ENCODE measurements at regions of chr12 and their contacts with region 1.

Region 1: DNA sequence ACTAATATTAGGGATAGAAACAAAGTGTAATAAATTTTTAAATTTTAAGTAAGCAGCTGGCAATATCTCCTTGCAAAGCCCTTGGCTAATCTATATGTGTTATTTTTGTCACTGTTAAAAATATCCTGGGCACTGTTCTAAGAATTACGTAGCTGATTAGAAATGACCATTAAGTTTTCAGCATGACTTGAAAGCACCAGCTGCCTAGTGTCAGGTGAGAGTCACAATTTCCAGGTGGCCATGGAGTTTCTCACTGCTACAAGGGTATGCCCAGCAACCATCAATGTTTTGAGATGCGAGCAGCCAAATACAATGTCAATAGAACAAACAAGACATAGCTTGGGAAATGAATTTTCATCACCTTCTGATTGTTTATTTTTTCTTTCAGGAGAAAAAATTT is 23.3 kb upstream of the GYS2 start:
- DNase-seq: no peak
- ATAC-seq: no peak
- H3K4me3 ChIP-seq: no peak overlapping the region
- H3K4me3 Mint-ChIP-seq: no peak overlapping the region
- H3K27ac ChIP-seq: no peak overlapping the region
- H3K27ac Mint-ChIP-seq: no peak overlapping the region
- H3K4me1 ChIP-seq: no peaks in the 10 kb centered on the region
- H3K4me1 Mint-ChIP-seq: peaks cover 7% of the 10 kb centered on the region
- H3K27me3 ChIP-seq: no peaks in the 10 kb centered on the region
- H3K27me3 Mint-ChIP-seq: no peaks in the 10 kb centered on the region
- CTCF ChIP-seq: no peak

Region 2: DNA sequence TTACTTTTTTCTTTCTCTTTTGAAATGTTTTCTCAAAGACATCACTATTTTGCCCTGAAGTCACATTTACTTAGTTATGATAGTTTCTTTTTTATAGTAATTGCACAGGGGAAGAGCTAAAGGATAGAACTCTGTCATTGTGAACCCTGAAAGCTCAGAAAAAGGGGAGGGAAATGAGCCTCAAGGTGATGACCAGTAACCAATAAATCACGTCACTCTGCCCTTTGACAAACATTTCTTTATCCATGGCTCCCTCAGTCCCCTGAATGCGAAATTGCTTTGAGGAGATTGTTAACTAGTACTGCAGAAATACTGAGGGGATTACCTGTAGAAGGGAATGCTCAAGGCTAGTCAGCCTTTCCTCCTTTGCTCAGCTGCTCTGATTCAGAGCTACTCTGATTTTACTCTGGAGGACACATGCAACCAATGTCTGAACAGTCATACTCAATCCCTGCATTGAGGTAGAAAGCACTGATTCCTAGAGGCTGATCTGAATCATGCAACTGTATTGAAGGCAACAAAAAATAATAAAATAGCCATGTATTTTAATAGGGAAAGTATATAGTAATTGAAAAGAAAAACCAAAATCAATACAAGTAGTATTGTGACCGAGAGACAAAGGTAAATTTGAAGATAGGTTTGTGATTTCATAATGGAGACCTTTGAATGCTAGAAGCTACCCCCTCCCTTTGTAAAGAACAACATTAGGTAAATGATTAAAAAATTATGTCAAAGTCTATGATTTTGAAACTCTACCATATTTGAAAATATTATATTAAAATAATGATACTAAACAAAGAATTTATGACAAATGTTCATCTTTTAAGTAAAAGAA is 472.2 kb before region 1 on chr12:
- CTCF ChIA-PET with region 1: no interaction called
- POLR2A ChIA-PET with region 1: no interaction called
- intact Hi-C with region 1: no loop called
- DNase-seq: no peak
- ATAC-seq: no peak
- H3K4me3 ChIP-seq: no peak overlapping the region
- H3K4me3 Mint-ChIP-seq: no peak overlapping the region
- H3K27ac ChIP-seq: no peak overlapping the region
- H3K27ac Mint-ChIP-seq: no peak overlapping the region
- H3K4me1 ChIP-seq: no peaks in the 10 kb centered on the region
- H3K4me1 Mint-ChIP-seq: no peaks in the 10 kb centered on the region
- H3K27me3 ChIP-seq: no peaks in the 10 kb centered on the region
- H3K27me3 Mint-ChIP-seq: no peaks in the 10 kb centered on the region
- CTCF ChIP-seq: no peak

Region 3: GRCh38 chr12:21613931-21614330 is 14.0 kb before region 1 on chr12:
- CTCF ChIA-PET with region 1: no interaction called
- POLR2A ChIA-PET with region 1: interaction called, 3 read pairs
- intact Hi-C with region 1: loop called in 1 of 2 experiments (anchors 2 kb)
- DNase-seq: no peak
- ATAC-seq: no peak
- H3K4me3 ChIP-seq: peak overlapping the region in 1 of 2 experiments; percentile 19
- H3K4me3 Mint-ChIP-seq: peak overlapping the region; percentile 29
- H3K27ac ChIP-seq: peak overlapping the region; percentile 32 to 68
- H3K27ac Mint-ChIP-seq: peak overlapping the region; percentile 92
- H3K4me1 ChIP-seq: peaks cover 54% of the 10 kb centered on the region
- H3K4me1 Mint-ChIP-seq: peaks cover 58% of the 10 kb centered on the region
- H3K27me3 ChIP-seq: no peaks in the 10 kb centered on the region
- H3K27me3 Mint-ChIP-seq: no peaks in the 10 kb centered on the region
- CTCF ChIP-seq: no peak